AG04450 (cell line): ENCODE measurements at regions of chr17 and their contacts with region 1.

Region 1: GRCh38 chr17:78390241-78391050 is 12.0 kb downstream of the PGS1 start:
- DNase-seq: peak; percentile 96
- H3K4me3 ChIP-seq: no peak overlapping the region
- H3K27ac ChIP-seq: peak overlapping the region; percentile 97
- H3K27me3 ChIP-seq: no peaks in the 10 kb centered on the region
- CTCF ChIP-seq: peak; percentile 18; the same call in 1 of the 2 replicates

Region 2: GRCh38 chr17:77280980-77281903 is 1109.2 kb before region 1 on chr17:
- CTCF ChIA-PET with region 1: no interaction called
- POLR2A ChIA-PET with region 1: no interaction called
- DNase-seq: no peak
- H3K4me3 ChIP-seq: peak overlapping the region; percentile 67
- H3K27ac ChIP-seq: no peak overlapping the region
- H3K27me3 ChIP-seq: no peaks in the 10 kb centered on the region
- CTCF ChIP-seq: no peak

Region 3: GRCh38 chr17:78341559-78342448 is 48.6 kb before region 1 on chr17:
- CTCF ChIA-PET with region 1: no interaction called
- POLR2A ChIA-PET with region 1: no interaction called
- DNase-seq: no peak
- H3K4me3 ChIP-seq: peak overlapping the region; percentile 25; the same call in 1 of the 2 replicates
- H3K27ac ChIP-seq: peak overlapping the region; percentile 92
- H3K27me3 ChIP-seq: no peaks in the 10 kb centered on the region
- CTCF ChIP-seq: no peak

Region 4: GRCh38 chr17:78375401-78376151 is 14.9 kb before region 1 on chr17:
- CTCF ChIA-PET with region 1: interaction called, 3 read pairs
- POLR2A ChIA-PET with region 1: interaction called, 21 read pairs
- DNase-seq: peak; percentile 88
- H3K4me3 ChIP-seq: no peak overlapping the region
- H3K27ac ChIP-seq: peak overlapping the region; percentile 100
- H3K27me3 ChIP-seq: no peaks in the 10 kb centered on the region
- CTCF ChIP-seq: no peak

Region 5: GRCh38 chr17:78401246-78401645 is 10.8 kb after region 1 on chr17:
- CTCF ChIA-PET with region 1: no interaction called
- POLR2A ChIA-PET with region 1: no interaction called
- DNase-seq: no peak
- H3K4me3 ChIP-seq: no peak overlapping the region
- H3K27ac ChIP-seq: no peak overlapping the region
- H3K27me3 ChIP-seq: no peaks in the 10 kb centered on the region
- CTCF ChIP-seq: no peak